CD4-positive, alpha-beta memory T cell (primary cell): ENCODE measurements at regions of chr3 and their contacts with region 1.

Region 1: GRCh38 chr3:153043729-153044328 is 118.2 kb upstream of the RAP2B start:
- DNase-seq: no peak
- H3K4me3 ChIP-seq: no peak overlapping the region
- H3K4me3 Mint-ChIP-seq: no peak overlapping the region
- H3K27ac ChIP-seq: no peak overlapping the region
- H3K27ac Mint-ChIP-seq: no peak overlapping the region
- H3K4me1 ChIP-seq: no peaks in the 10 kb centered on the region
- H3K4me1 Mint-ChIP-seq: peaks cover 0 to 5% (median 4%) of the 10 kb centered on the region in 4 donors
- H3K27me3 ChIP-seq: no peaks in the 10 kb centered on the region
- H3K27me3 Mint-ChIP-seq: peaks cover 0 to 1% of the 10 kb centered on the region in 2 donors

Region 2: GRCh38 chr3:152915695-152916094 is 128.1 kb before region 1 on chr3:
- CTCF ChIA-PET with region 1: no interaction called
- POLR2A ChIA-PET with region 1: no interaction called
- intact Hi-C with region 1: no loop called
- DNase-seq: no peak
- H3K4me3 ChIP-seq: no peak overlapping the region
- H3K4me3 Mint-ChIP-seq: no peak overlapping the region
- H3K27ac ChIP-seq: no peak overlapping the region
- H3K27ac Mint-ChIP-seq: no peak overlapping the region
- H3K4me1 ChIP-seq: no peaks in the 10 kb centered on the region
- H3K4me1 Mint-ChIP-seq: no peaks in the 10 kb centered on the region
- H3K27me3 ChIP-seq: no peaks in the 10 kb centered on the region
- H3K27me3 Mint-ChIP-seq: peaks cover 1 to 2% of the 10 kb centered on the region in 2 donors

Region 3: DNA sequence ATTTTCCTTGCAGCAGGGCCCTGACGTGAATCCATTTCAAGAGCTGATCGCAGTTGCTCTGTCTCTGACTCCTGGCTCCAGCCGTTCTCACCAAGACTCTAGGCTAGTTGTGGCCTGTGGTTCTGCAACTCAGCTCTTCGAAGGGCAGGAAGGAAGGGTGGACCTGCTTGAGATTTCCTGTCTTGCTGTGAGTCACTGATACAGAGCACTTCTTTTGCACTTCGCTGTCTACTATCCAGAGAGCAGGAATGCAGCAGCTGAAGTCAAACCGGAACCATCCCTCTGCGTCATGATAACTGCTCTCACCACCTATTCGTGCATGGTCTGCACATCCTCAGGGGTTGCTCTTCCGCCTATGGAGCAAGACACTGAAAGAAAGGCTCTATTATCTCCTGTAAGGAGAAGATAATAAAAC is 177.9 kb after region 1 on chr3:
- CTCF ChIA-PET with region 1: no interaction called
- POLR2A ChIA-PET with region 1: interaction called, 5 read pairs
- intact Hi-C with region 1: loop called (anchors 1 kb)
- DNase-seq: peak; percentile 86 to 95 (median 90)
- H3K4me3 ChIP-seq: peak overlapping the region; percentile 12 to 23
- H3K4me3 Mint-ChIP-seq: peak overlapping the region; percentile 41 to 86 (median 76)
- H3K27ac ChIP-seq: peak overlapping the region; percentile 67
- H3K27ac Mint-ChIP-seq: peak overlapping the region; percentile 90 to 99 (median 98)
- H3K4me1 ChIP-seq: peaks cover 84% of the 10 kb centered on the region
- H3K4me1 Mint-ChIP-seq: peaks cover 50 to 72% (median 60%) of the 10 kb centered on the region in 4 donors
- H3K27me3 ChIP-seq: no peaks in the 10 kb centered on the region
- H3K27me3 Mint-ChIP-seq: no peaks in the 10 kb centered on the region

Region 4: DNA sequence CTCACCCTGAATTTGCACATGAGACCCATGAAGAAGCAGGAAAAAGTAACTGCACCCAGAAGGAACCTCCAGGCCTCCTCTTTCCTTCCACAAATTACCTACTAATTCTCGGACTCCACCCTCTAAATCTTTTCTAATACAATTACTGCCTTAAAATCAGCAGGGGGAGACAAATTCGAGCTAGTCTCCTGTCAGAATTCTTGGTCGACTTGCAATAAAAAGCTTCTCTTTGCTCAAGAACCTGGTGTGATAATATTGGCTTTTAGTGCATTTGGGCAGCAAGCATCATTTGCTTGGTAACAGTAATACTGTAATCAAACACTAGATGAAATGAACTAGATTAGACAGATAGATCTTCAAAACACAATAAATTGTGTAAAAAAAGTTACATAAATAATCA is 400.1 kb after region 1 on chr3:
- CTCF ChIA-PET with region 1: no interaction called
- POLR2A ChIA-PET with region 1: no interaction called
- intact Hi-C with region 1: loop called (anchors 5 kb)
- DNase-seq: no peak
- H3K4me3 ChIP-seq: no peak overlapping the region
- H3K4me3 Mint-ChIP-seq: no peak overlapping the region
- H3K27ac ChIP-seq: no peak overlapping the region
- H3K27ac Mint-ChIP-seq: no peak overlapping the region
- H3K4me1 ChIP-seq: peaks cover 10% of the 10 kb centered on the region
- H3K4me1 Mint-ChIP-seq: peaks cover 16 to 25% (median 20%) of the 10 kb centered on the region in 4 donors
- H3K27me3 ChIP-seq: no peaks in the 10 kb centered on the region
- H3K27me3 Mint-ChIP-seq: no peaks in the 10 kb centered on the region

Region 5: DNA sequence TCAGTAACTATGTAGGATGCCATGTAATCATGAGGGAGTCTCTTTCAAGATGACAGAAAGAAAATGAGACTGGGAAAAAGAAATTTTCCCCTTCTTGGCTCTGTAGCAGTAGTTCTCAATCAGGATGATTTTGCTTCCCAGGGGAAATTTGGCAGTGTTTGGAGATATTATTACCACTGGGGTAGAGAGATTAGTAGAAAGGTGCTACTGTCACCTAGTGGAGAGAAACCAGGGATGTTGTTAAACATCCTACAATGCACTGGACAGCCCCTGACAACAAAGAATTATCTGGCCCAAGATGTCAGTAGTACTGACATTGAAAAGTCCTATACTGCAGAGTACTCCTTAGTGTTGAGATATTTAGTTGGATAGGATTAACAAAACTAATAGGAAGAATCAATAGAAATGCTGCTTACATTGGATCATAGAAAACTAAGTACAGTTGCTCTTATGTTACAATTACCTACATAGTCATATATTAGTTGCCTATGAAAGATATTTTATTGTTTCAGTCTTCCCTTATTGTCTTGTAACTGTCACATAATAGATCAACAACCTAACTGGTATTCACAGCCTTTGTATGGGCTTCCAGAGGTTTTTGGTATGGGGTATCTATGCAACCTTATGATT is 551.5 kb after region 1 on chr3:
- CTCF ChIA-PET with region 1: interaction called, 9 read pairs
- POLR2A ChIA-PET with region 1: interaction called, 5 read pairs
- intact Hi-C with region 1: loop called (anchors 1 kb)
- DNase-seq: peak in 4 of 5 donors; percentile 13 to 24 (median 16)
- H3K4me3 ChIP-seq: no peak overlapping the region
- H3K4me3 Mint-ChIP-seq: no peak overlapping the region
- H3K27ac ChIP-seq: no peak overlapping the region
- H3K27ac Mint-ChIP-seq: peak overlapping the region in 1 of 7 donors; percentile 34
- H3K4me1 ChIP-seq: no peaks in the 10 kb centered on the region
- H3K4me1 Mint-ChIP-seq: peaks cover 0 to 6% (median 5%) of the 10 kb centered on the region in 4 donors
- H3K27me3 ChIP-seq: no peaks in the 10 kb centered on the region
- H3K27me3 Mint-ChIP-seq: no peaks in the 10 kb centered on the region

Region 6: GRCh38 chr3:153768561-153769469 is 725.0 kb after region 1 on chr3:
- CTCF ChIA-PET with region 1: interaction called, 84 read pairs
- POLR2A ChIA-PET with region 1: interaction called, 4 read pairs
- intact Hi-C with region 1: loop called (anchors 1 kb)
- DNase-seq: peak; percentile 52 to 65 (median 62)
- H3K4me3 ChIP-seq: no peak overlapping the region
- H3K4me3 Mint-ChIP-seq: no peak overlapping the region
- H3K27ac ChIP-seq: no peak overlapping the region
- H3K27ac Mint-ChIP-seq: no peak overlapping the region
- H3K4me1 ChIP-seq: no peaks in the 10 kb centered on the region
- H3K4me1 Mint-ChIP-seq: peaks cover 0 to 5% (median 3%) of the 10 kb centered on the region in 4 donors
- H3K27me3 ChIP-seq: no peaks in the 10 kb centered on the region
- H3K27me3 Mint-ChIP-seq: peaks cover 2 to 4% of the 10 kb centered on the region in 2 donors